ENCODE measurements at regions of chr20 and their contacts with region 1.

Region 1: GRCh38 chr20:17968366-17969279 is at the starts of genes MGME1 and SNX5:
- DNase-seq: peak; percentile 100
- H3K4me3 ChIP-seq: peak within 1 kb of the TSS; percentile 55 to 95 (median 83)
- H3K27ac ChIP-seq: peak within 1 kb of the TSS; percentile 94 to 97 (median 96)
- H3K4me1 ChIP-seq: peaks cover 0 to 79% (median 64%) of the 10 kb centered on the region in 4 donors
- H3K27me3 ChIP-seq: no peaks in the 10 kb centered on the region
- CTCF ChIP-seq: no peak
- EP300 ChIP-seq: peak in 2 of 4 donors; percentile 17 to 48
- POLR2A ChIP-seq: peak; percentile 26 to 33
- total RNA-seq, gene MGME1: 5.0 to 15.8 (median 10.8) TPM
- total RNA-seq, gene SNX5: 69.0 to 79.5 (median 72.5) TPM

Region 2: DNA sequence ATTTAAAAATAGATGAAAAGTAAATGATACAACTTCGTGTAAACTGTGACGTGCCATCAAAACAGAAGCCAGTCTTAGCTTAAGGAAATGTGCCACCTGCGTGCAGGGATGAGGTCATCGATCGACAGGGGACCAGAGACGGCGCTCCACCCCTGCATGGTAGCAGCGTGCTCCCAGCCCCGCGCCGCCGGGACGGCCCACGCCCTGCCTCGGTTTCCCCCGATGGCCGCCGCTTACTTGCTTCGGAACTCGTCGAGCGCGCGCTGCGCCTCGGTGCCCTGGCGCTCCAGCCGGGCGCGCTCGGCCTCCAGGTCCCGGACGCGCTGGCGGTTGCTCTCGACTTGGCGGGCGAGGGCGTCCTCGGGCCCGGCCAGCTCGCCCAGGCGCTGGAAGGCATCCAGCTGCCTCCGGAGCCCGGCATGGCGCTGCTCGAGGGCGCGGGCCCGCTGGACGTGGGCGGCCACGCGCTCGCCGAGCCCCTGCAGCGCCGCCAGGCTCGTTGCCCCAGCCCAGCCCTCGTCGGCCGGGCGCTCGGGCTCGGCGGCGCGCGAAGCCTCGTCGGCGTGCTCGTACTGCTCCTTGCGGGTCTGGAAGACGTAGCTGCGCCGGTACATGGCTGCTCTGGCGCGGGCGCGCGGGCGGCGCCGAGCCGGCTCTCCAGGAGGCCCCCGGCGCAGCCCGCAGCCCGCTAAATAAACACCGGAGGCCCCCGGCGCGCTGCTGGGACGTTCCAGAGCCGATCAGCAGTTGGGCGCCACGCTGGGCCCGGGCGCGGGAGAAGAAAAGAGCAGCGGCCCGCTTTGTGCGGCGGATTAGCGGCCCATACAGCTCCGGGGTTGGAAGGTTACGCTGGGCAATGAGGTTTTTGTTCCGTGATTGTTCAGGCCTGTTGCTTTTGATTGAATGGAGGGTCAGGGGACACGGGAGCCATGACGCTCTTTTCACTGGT is 437.6 kb before region 1 on chr20 and contains the start of gene BFSP1:
- intact Hi-C with region 1: loop called (anchors 5 kb)
- DNase-seq: no peak
- H3K4me3 ChIP-seq: peak within 1 kb of the TSS; percentile 37 to 66 (median 62)
- H3K27ac ChIP-seq: peak within 1 kb of the TSS; percentile 77 to 92 (median 86)
- H3K4me1 ChIP-seq: peaks cover 0 to 24% (median 13%) of the 10 kb centered on the region in 4 donors
- H3K27me3 ChIP-seq: no peaks in the 10 kb centered on the region
- CTCF ChIP-seq: no peak
- EP300 ChIP-seq: no peak
- POLR2A ChIP-seq: no peak
- total RNA-seq, gene BFSP1: 1.1 to 3.6 (median 1.5) TPM

Region 3: GRCh38 chr20:18137412-18138265 is 169.0 kb after region 1 on chr20 and contains the starts of genes KAT14 and PET117:
- intact Hi-C with region 1: loop called (anchors 5 kb)
- DNase-seq: peak; percentile 93
- H3K4me3 ChIP-seq: peak within 1 kb of the TSS; percentile 62 to 83 (median 78)
- H3K27ac ChIP-seq: peak within 1 kb of the TSS; percentile 91 to 93 (median 92)
- H3K4me1 ChIP-seq: peaks cover 0 to 37% (median 30%) of the 10 kb centered on the region in 4 donors
- H3K27me3 ChIP-seq: no peaks in the 10 kb centered on the region
- CTCF ChIP-seq: no peak
- EP300 ChIP-seq: no peak
- POLR2A ChIP-seq: peak; percentile 38 to 47
- total RNA-seq, gene KAT14: 12.6 to 21.7 (median 17.9) TPM
- total RNA-seq, gene PET117: 7.8 to 18.8 (median 16.9) TPM

Region 4: GRCh38 chr20:18243802-18244201 is 275.2 kb after region 1 on chr20:
- intact Hi-C with region 1: no loop called
- DNase-seq: no peak
- H3K4me3 ChIP-seq: no peak overlapping the region
- H3K27ac ChIP-seq: no peak overlapping the region
- H3K4me1 ChIP-seq: no peaks in the 10 kb centered on the region
- H3K27me3 ChIP-seq: no peaks in the 10 kb centered on the region
- CTCF ChIP-seq: no peak
- EP300 ChIP-seq: no peak
- POLR2A ChIP-seq: no peak

Measured in sigmoid colon (tissue), 7 donors.